ENCODE measurements at regions of chr17 and their contacts with region 1.

Region 1: DNA sequence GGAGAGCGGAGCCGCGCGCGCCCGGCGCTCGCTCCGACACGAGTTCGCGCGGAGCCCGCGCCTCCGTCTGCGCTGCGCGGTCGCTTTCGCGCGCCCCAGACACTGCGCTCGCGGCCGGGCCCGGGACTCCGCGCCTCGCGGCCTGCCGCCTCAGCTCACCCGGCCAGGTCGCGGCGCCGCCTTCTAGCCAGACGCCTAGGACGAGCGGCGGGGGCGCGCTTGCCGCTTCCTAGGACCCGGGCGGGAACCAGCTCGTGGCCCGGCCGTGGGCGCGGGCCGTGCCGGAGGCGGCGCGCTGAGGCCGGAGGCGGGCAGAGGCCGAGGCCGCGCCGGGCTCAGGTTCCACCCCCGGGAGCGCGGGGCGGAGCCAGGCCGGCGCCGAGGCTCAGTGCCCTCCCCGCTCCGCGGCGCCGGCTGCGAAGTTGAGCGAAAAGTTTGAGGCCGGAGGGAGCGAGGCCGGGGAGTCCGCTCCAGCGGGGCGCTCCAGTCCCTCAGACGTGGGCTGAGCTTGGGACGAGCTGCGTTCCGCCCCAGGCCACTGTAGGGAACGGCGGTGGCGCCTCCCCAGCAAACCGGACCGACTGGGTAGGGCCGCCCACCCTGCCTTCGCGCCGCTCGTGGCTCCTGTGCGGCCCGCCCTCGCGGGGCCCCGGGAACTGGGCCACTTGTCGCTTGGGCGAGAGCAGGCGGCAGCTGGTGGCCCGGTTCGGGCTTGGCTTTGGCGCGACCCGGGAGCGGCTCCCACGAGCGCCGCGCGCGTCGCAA is at the start of gene SPHK1:
- DNase-seq: peak; percentile 77
- ATAC-seq: peak; percentile 75
- H3K4me3 Mint-ChIP-seq: peak within 1 kb of the TSS; percentile 82
- H3K27ac Mint-ChIP-seq: peak within 1 kb of the TSS; percentile 88
- H3K4me1 Mint-ChIP-seq: peaks cover 24% of the 10 kb centered on the region
- H3K27me3 Mint-ChIP-seq: no peaks in the 10 kb centered on the region
- total RNA-seq, gene SPHK1: 3.8 to 4.7 TPM

Region 2: DNA sequence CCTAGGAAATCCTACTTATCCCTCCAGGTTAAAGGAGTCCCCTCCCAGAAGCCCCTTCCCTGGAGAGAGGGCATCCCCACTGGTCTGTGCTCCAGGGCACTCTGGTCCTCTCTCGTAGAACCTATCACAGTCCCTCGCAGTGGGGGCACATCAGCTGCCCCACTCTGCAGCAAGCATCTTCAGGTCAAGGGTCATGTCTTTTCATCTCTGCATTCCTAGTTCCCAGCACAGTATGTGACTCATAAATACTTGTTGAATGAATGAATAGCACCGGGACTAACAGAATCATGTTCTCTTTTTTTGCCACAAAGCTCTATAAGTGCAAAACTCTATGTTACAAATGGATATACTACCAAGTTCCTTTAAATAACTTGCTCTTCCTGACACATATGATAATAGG is 180.1 kb before region 1 on chr17:
- CTCF ChIA-PET with region 1: no interaction called
- POLR2A ChIA-PET with region 1: no interaction called
- DNase-seq: no peak
- ATAC-seq: no peak
- H3K4me3 Mint-ChIP-seq: no peak overlapping the region
- H3K27ac Mint-ChIP-seq: peak overlapping the region; percentile 44
- H3K4me1 Mint-ChIP-seq: peaks cover 72% of the 10 kb centered on the region
- H3K27me3 Mint-ChIP-seq: no peaks in the 10 kb centered on the region

Region 3: GRCh38 chr17:76262732-76263344 is 121.6 kb before region 1 on chr17:
- CTCF ChIA-PET with region 1: no interaction called
- POLR2A ChIA-PET with region 1: no interaction called
- DNase-seq: peak; percentile 58
- ATAC-seq: no peak
- H3K4me3 Mint-ChIP-seq: peak overlapping the region; percentile 68
- H3K27ac Mint-ChIP-seq: peak overlapping the region; percentile 94
- H3K4me1 Mint-ChIP-seq: peaks cover 46% of the 10 kb centered on the region
- H3K27me3 Mint-ChIP-seq: no peaks in the 10 kb centered on the region

Region 4: DNA sequence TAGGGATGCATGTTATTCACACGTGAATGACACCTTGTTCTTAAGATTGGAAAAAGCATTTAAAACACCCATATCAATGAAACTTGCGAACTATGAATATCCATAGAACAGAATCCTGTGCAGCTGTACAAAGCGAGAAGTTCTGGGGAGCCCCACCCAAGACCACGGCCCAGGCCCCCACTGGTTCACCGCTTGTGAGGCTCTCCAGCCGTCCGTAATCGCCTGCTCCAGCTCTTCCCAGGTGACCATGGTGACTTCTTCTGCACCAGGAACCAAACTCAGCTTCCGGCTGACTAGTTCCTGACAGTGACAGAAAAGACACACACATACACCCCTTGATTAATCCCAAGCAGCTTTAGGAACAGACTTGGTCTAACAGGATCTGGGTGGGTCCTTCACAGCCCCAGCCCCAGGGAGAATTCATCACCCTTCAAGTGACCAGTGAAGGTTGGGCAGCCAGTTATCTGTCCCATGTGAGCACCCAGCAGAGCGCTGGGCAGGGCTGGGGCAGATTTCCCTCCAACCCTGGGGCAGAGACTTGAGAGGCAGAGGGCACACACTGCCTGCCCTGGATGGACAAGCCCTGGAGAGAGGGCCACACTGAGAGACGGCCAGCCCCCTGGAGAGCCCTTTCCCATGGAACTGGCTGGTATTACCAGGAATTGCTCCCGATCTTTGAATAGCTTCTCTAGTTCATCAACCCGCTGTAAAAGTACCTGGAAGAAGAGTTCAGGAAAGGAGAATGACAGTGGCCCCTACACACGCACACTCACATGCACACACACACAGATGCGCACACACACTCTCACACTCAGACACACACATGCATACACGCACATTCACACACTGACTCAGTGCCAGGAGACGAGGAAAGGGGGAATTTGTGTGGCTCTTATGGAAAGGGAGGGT is 79.9 kb before region 1 on chr17:
- CTCF ChIA-PET with region 1: interaction called, 33 read pairs
- POLR2A ChIA-PET with region 1: no interaction called
- DNase-seq: no peak
- ATAC-seq: no peak
- H3K4me3 Mint-ChIP-seq: no peak overlapping the region
- H3K27ac Mint-ChIP-seq: peak overlapping the region; percentile 62
- H3K4me1 Mint-ChIP-seq: peaks cover 5% of the 10 kb centered on the region
- H3K27me3 Mint-ChIP-seq: no peaks in the 10 kb centered on the region

Region 5: DNA sequence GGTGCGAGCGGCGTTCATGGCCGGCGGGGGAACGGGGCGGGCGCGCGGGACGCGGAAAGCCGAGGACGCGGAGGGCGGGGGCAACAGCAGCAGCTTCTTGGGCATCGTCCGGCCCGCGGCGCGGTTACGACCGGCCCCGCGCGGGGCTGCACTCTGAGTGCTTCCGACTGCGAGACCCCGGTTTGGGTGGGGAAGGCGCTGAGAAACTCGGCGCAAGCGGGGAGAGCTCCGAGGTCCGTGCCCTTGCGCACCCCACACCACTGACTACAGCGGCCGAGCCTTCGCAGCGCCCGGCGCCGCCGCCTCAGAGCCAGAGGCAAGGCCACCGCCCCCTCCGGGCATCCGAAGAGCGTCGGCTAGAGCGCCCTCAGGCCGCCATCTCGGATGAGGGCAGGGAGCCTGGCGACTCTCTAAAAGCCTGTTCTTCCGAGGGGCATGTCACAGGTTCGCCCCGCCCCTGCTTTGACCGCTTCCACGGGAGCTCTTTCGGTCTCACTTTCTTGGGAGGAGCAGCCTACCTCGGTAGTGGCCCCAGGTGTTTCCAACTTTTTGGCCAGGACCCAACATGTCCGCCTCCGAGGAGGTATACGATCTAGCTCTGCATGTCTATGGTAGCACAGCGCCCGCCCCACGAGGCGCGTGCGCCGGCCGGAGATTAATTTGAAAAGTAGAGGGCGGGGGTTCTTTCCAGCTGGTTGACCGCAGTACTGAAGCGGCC is 30.6 kb before region 1 on chr17 and contains the start of gene PRPSAP1:
- CTCF ChIA-PET with region 1: interaction called, 35 read pairs
- POLR2A ChIA-PET with region 1: interaction called, 24 read pairs
- DNase-seq: peak; percentile 88
- ATAC-seq: peak; percentile 97
- H3K4me3 Mint-ChIP-seq: peak within 1 kb of the TSS; percentile 98
- H3K27ac Mint-ChIP-seq: peak within 1 kb of the TSS; percentile 100
- H3K4me1 Mint-ChIP-seq: peaks cover 28% of the 10 kb centered on the region
- H3K27me3 Mint-ChIP-seq: no peaks in the 10 kb centered on the region
- total RNA-seq, gene PRPSAP1: 64.2 to 74.1 TPM

Region 6: GRCh38 chr17:76365256-76365903 is 19.0 kb before region 1 on chr17:
- CTCF ChIA-PET with region 1: interaction called, 27 read pairs
- POLR2A ChIA-PET with region 1: no interaction called
- DNase-seq: no peak
- ATAC-seq: no peak
- H3K4me3 Mint-ChIP-seq: no peak overlapping the region
- H3K27ac Mint-ChIP-seq: no peak overlapping the region
- H3K4me1 Mint-ChIP-seq: no peaks in the 10 kb centered on the region
- H3K27me3 Mint-ChIP-seq: peaks cover 3% of the 10 kb centered on the region

Region 7: GRCh38 chr17:76421044-76421407 is 36.6 kb after region 1 on chr17:
- CTCF ChIA-PET with region 1: no interaction called
- POLR2A ChIA-PET with region 1: no interaction called
- DNase-seq: no peak
- ATAC-seq: no peak
- H3K4me3 Mint-ChIP-seq: no peak overlapping the region
- H3K27ac Mint-ChIP-seq: no peak overlapping the region
- H3K4me1 Mint-ChIP-seq: no peaks in the 10 kb centered on the region
- H3K27me3 Mint-ChIP-seq: no peaks in the 10 kb centered on the region

Region 8: GRCh38 chr17:76506408-76507349 is 122.3 kb after region 1 on chr17:
- CTCF ChIA-PET with region 1: interaction called, 12 read pairs
- POLR2A ChIA-PET with region 1: no interaction called
- DNase-seq: peak; percentile 91
- ATAC-seq: peak; percentile 85
- H3K4me3 Mint-ChIP-seq: no peak overlapping the region
- H3K27ac Mint-ChIP-seq: peak overlapping the region; percentile 49
- H3K4me1 Mint-ChIP-seq: peaks cover 43% of the 10 kb centered on the region
- H3K27me3 Mint-ChIP-seq: peaks cover 4% of the 10 kb centered on the region